Dendritic cell treated with granulocyte-macrophage colony-stimulating factor and Interleukin-4, amounts not matched to agents 40 ng/mL and 50 ng/mL, for 4 days (primary cell): ENCODE measurements at regions of chr9 and their contacts with region 1.

Region 1: DNA sequence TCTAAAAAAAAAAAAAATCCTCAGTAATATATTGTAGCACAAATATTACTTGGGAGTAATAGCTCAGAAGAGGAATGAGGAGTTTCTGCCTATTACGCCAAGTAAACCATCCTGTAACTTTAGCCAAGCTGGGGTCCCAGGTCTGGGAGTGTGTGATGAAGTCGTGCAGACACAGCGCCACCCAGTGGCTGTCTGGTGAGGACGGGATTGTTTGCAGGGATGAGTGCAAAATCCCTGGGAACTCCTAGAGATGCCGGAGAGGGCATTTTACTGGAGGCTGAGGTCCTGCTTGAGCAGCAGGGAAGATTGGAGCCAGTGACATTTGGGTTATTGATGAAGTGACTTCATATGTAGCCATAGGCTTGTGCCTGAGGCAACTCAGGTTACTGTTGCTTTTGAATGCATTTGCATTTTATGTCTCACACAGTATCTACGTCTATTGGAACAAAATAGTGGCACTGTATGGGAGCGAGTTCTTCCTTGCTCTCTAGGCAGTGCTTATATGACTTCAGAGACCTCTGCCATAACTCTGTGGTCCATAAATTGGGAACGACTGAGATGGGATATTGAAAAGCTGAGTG is 72.8 kb downstream of the PSAT1 start:
- H3K4me3 Mint-ChIP-seq: no peak overlapping the region
- H3K27ac Mint-ChIP-seq: no peak overlapping the region
- H3K4me1 Mint-ChIP-seq: peaks cover 5% of the 10 kb centered on the region
- H3K27me3 Mint-ChIP-seq: no peaks in the 10 kb centered on the region

Region 2: GRCh38 chr9:78261403-78262001 is 108.2 kb before region 1 on chr9:
- intact Hi-C with region 1: loop called (anchors 1 kb)
- H3K4me3 Mint-ChIP-seq: no peak overlapping the region
- H3K27ac Mint-ChIP-seq: no peak overlapping the region
- H3K4me1 Mint-ChIP-seq: no peaks in the 10 kb centered on the region
- H3K27me3 Mint-ChIP-seq: no peaks in the 10 kb centered on the region

Region 3: GRCh38 chr9:78325343-78325742 is 44.4 kb before region 1 on chr9:
- intact Hi-C with region 1: loop called (anchors 5 kb)
- H3K4me3 Mint-ChIP-seq: no peak overlapping the region
- H3K27ac Mint-ChIP-seq: no peak overlapping the region
- H3K4me1 Mint-ChIP-seq: peaks cover 9% of the 10 kb centered on the region
- H3K27me3 Mint-ChIP-seq: no peaks in the 10 kb centered on the region